CD8-positive, alpha-beta T cell (primary cell): ENCODE measurements at regions of chr9 and their contacts with region 1.

Region 1: DNA sequence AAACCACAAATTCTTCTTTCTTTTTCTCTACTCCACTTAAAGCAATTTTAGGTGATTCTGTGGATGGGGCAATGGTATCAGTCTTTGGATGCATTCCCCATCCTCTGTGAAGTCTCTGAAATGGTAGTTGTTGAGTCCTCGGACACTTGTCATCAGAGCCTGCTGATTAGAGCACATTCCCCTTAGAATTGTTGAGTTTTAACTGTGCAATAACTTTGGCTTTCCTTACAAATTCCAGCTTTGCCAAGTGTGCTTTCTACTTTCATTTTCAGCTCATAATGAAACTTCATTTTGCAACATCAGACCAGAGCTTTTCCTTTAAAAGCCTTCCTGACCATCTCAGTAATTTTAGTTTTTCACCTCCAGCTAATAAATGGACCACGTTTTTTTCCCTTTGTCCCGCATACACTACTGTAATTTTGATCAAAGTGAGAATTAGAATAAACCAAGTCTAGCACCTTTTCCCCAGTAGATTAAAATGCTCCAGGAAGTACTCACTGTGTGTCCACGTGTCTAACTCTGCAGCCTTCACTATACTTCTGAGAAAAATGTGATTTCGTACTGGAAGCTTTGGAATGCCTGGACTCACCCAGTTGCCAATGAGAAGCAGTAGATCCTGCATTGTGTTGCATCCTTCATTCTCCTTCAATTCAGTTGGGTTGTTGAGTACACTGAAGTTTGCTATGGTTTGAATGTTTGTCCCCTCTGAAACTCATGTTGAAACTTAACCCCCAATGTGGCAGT is 135.6 kb downstream of the NTRK2 start:
- DNase-seq: no peak
- ATAC-seq: no peak
- H3K4me3 ChIP-seq: no peak overlapping the region
- H3K4me3 Mint-ChIP-seq: no peak overlapping the region
- H3K27ac ChIP-seq: no peak overlapping the region
- H3K27ac Mint-ChIP-seq: no peak overlapping the region
- H3K4me1 ChIP-seq: no peaks in the 10 kb centered on the region
- H3K4me1 Mint-ChIP-seq: no peaks in the 10 kb centered on the region
- H3K27me3 ChIP-seq: no peaks in the 10 kb centered on the region
- H3K27me3 Mint-ChIP-seq: no peaks in the 10 kb centered on the region
- CTCF ChIP-seq: no peak

Region 2: GRCh38 chr9:84615181-84615943 is 189.8 kb before region 1 on chr9:
- CTCF ChIA-PET with region 1: no interaction called
- POLR2A ChIA-PET with region 1: no interaction called
- intact Hi-C with region 1: no loop called
- DNase-seq: no peak
- ATAC-seq: no peak
- H3K4me3 ChIP-seq: no peak overlapping the region
- H3K4me3 Mint-ChIP-seq: no peak overlapping the region
- H3K27ac ChIP-seq: no peak overlapping the region
- H3K27ac Mint-ChIP-seq: no peak overlapping the region
- H3K4me1 ChIP-seq: no peaks in the 10 kb centered on the region
- H3K4me1 Mint-ChIP-seq: no peaks in the 10 kb centered on the region
- H3K27me3 ChIP-seq: no peaks in the 10 kb centered on the region
- H3K27me3 Mint-ChIP-seq: no peaks in the 10 kb centered on the region
- CTCF ChIP-seq: no peak

Region 3: DNA sequence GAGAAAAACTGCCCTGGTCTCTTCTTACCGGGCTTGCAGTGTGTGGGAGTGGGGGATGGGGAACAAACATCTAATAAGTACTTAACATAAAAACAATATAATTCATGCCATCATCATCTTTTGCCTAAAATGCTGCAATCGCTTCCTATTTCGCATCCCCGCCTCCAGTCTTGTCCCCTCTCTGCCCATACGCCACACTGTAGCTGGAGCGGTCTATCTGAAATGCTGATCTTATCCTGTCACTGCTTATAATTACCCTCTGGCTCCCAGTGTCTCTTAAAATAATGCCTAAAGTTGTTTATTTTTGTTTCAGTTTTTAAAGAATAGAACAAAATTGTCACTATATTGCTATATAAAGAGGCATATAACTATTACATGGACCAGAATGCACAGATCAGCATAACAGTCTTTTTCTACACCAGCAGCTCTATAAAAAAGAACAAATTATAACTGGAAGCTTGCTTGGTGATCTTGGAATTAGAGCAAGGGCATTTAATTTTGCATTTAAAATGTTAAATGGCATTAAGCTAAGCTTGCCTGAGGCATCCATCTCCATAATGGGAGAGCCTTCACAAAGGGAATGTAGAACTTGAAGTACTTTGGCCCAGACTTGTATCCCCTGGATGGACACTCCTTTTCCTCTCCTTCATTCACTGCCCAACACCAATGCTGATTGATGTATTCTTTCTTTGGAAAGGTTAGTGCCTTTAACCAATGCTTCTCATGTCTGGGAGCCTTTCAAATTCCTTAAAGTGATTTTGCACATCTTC is 123.4 kb before region 1 on chr9:
- CTCF ChIA-PET with region 1: no interaction called
- POLR2A ChIA-PET with region 1: no interaction called
- intact Hi-C with region 1: no loop called
- DNase-seq: no peak
- ATAC-seq: no peak
- H3K4me3 ChIP-seq: no peak overlapping the region
- H3K4me3 Mint-ChIP-seq: no peak overlapping the region
- H3K27ac ChIP-seq: no peak overlapping the region
- H3K27ac Mint-ChIP-seq: no peak overlapping the region
- H3K4me1 ChIP-seq: no peaks in the 10 kb centered on the region
- H3K4me1 Mint-ChIP-seq: no peaks in the 10 kb centered on the region
- H3K27me3 ChIP-seq: no peaks in the 10 kb centered on the region
- H3K27me3 Mint-ChIP-seq: peaks cover 9% of the 10 kb centered on the region
- CTCF ChIP-seq: no peak

Region 4: DNA sequence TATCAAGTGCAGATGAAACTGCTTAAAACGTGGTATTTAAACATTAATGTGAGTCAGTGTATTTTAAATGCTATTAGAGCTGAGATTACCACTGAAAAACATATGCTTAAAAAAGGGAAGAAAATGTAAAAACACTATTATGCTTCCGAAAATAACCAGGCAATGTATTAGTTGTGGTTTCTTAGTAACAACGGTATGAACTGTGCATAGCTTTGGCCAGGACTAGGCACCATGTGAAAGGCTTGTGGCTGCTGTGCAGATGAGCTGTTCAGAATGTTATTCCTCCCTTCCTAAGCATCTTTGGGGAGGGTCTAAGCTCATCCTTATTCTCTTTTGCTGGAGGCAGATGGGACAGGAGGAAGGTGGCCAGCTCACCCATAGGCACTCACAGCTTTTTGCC is 50.7 kb before region 1 on chr9:
- CTCF ChIA-PET with region 1: no interaction called
- POLR2A ChIA-PET with region 1: no interaction called
- intact Hi-C with region 1: loop called in 1 of 2 experiments (anchors 2 kb)
- DNase-seq: no peak
- ATAC-seq: no peak
- H3K4me3 ChIP-seq: no peak overlapping the region
- H3K4me3 Mint-ChIP-seq: no peak overlapping the region
- H3K27ac ChIP-seq: no peak overlapping the region
- H3K27ac Mint-ChIP-seq: no peak overlapping the region
- H3K4me1 ChIP-seq: no peaks in the 10 kb centered on the region
- H3K4me1 Mint-ChIP-seq: no peaks in the 10 kb centered on the region
- H3K27me3 ChIP-seq: no peaks in the 10 kb centered on the region
- H3K27me3 Mint-ChIP-seq: peaks cover 2% of the 10 kb centered on the region
- CTCF ChIP-seq: no peak

Region 5: DNA sequence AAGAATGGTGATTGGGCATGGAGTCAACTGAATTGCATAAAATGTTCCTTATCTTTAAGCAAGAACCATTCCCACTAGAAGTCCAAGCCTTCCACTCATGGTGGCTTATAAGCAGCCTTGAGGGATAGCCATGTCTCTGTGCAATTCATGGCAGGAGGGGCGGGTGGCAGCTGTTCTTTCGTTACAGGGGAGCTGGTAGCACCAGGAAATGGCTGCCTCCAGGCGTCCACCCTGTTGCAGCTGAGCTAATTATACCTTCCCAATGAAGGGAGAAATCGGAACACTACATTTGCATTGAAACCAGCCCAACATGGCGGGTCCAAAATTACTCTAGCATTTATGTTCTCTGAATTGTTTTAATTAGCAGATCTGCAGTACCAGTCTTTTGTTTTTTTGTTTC is 154.2 kb after region 1 on chr9:
- CTCF ChIA-PET with region 1: no interaction called
- POLR2A ChIA-PET with region 1: no interaction called
- intact Hi-C with region 1: no loop called
- DNase-seq: no peak
- ATAC-seq: no peak
- H3K4me3 ChIP-seq: no peak overlapping the region
- H3K4me3 Mint-ChIP-seq: no peak overlapping the region
- H3K27ac ChIP-seq: no peak overlapping the region
- H3K27ac Mint-ChIP-seq: no peak overlapping the region
- H3K4me1 ChIP-seq: no peaks in the 10 kb centered on the region
- H3K4me1 Mint-ChIP-seq: no peaks in the 10 kb centered on the region
- H3K27me3 ChIP-seq: no peaks in the 10 kb centered on the region
- H3K27me3 Mint-ChIP-seq: peaks cover 10% of the 10 kb centered on the region
- CTCF ChIP-seq: no peak

Region 6: GRCh38 chr9:85276741-85277140 is 471.6 kb after region 1 on chr9:
- CTCF ChIA-PET with region 1: no interaction called
- POLR2A ChIA-PET with region 1: no interaction called
- intact Hi-C with region 1: no loop called
- DNase-seq: no peak
- ATAC-seq: no peak
- H3K4me3 ChIP-seq: no peak overlapping the region
- H3K4me3 Mint-ChIP-seq: no peak overlapping the region
- H3K27ac ChIP-seq: no peak overlapping the region
- H3K27ac Mint-ChIP-seq: no peak overlapping the region
- H3K4me1 ChIP-seq: no peaks in the 10 kb centered on the region
- H3K4me1 Mint-ChIP-seq: no peaks in the 10 kb centered on the region
- H3K27me3 ChIP-seq: no peaks in the 10 kb centered on the region
- H3K27me3 Mint-ChIP-seq: peaks cover 7% of the 10 kb centered on the region
- CTCF ChIP-seq: no peak